H1 (cell line): ENCODE measurements at regions of chr22 and their contacts with region 1.

Region 1: GRCh38 chr22:22241554-22241898 is 3.1 kb upstream of the VPREB1 start:
- DNase-seq: no peak
- H3K4me3 ChIP-seq: no peak overlapping the region
- H3K27ac ChIP-seq: no peak overlapping the region
- H3K4me1 ChIP-seq: no peaks in the 10 kb centered on the region
- H3K27me3 ChIP-seq: peaks cover 84 to 99% (median 97%) of the 10 kb centered on the region in 4 experiments
- CTCF ChIP-seq: no peak
- EP300 ChIP-seq: no peak
- POLR2A ChIP-seq: no peak
- RAD21 ChIP-seq: no peak

Region 2: DNA sequence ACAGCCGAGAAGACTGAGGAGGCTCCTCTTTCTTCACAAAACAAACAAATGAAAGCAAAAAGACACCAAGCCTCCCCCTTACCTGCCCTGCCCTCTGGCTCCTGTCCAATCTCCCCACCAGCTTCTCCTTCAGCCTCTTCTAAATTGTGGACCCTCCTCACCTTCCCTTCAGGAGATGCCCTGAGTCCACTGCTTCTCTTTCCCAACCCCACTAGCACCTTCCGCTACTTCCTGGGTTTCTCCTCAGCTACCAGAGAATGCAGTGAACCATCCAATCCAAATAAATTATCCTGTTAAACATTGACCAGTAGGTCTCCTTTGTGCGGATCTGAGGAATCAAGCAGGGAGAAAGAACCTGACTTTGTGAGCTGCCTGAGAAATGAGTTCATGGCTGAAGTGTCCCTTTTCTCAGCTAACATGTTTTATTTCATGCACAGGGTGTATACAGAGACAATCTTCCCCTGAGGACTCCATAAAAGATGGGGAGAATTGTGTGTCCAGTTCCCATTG is 60.1 kb before region 1 on chr22:
- CTCF ChIA-PET with region 1: no interaction called
- POLR2A ChIA-PET with region 1: no interaction called
- DNase-seq: no peak
- H3K4me3 ChIP-seq: no peak overlapping the region
- H3K27ac ChIP-seq: no peak overlapping the region
- H3K4me1 ChIP-seq: no peaks in the 10 kb centered on the region
- H3K27me3 ChIP-seq: peaks cover 86 to 100% (median 98%) of the 10 kb centered on the region in 4 experiments
- CTCF ChIP-seq: no peak
- EP300 ChIP-seq: no peak
- POLR2A ChIP-seq: no peak
- RAD21 ChIP-seq: no peak

Region 3: GRCh38 chr22:22207845-22208564 is 33.5 kb before region 1 on chr22:
- CTCF ChIA-PET with region 1: interaction called, 29 read pairs
- POLR2A ChIA-PET with region 1: no interaction called
- DNase-seq: peak; percentile 36 to 92
- H3K4me3 ChIP-seq: no peak overlapping the region
- H3K27ac ChIP-seq: no peak overlapping the region
- H3K4me1 ChIP-seq: no peaks in the 10 kb centered on the region
- H3K27me3 ChIP-seq: peaks cover 78 to 99% (median 89%) of the 10 kb centered on the region in 4 experiments
- CTCF ChIP-seq: peak; percentile 74 to 86 (median 81)
- EP300 ChIP-seq: no peak
- POLR2A ChIP-seq: no peak
- RAD21 ChIP-seq: peak; percentile 85 to 86

Region 4: DNA sequence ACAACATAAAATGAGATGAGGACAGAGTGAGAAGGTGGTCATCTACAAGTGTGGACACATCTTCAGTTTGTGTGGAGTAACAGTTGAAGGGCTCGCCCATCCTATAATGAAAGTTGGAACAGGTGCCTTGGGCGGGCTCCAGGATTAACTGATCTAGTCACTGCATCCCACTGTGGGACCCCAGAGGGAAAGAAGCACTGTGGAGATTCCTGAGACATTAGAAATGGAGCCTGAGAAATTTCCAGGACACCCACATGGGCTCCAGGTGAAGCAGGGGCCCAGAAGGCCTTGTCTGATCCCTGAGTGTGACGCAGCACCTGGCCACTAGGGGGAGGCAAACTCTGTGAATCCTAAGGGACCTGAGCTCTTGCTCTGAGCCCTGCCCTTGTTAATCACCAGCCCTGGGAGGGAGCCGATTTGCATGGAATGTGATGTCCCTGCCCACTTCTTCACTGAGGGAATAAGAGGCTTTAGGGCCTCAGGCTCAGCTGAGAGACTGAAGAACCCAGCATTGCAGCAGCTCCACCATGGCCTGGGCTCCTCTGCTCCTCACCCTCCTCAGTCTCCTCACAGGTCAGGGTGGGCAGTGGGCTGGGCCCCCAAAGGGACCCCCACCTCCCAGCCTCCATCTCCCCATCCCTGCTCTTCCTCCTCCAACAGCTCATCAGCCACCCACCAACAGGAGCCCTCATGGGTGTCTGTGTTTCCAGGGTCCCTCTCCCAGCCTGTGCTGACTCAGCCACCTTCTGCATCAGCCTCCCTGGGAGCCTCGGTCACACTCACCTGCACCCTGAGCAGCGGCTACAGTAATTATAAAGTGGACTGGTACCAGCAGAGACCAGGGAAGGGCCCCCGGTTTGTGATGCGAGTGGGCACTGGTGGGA is 101.4 kb after region 1 on chr22:
- CTCF ChIA-PET with region 1: no interaction called
- POLR2A ChIA-PET with region 1: no interaction called
- DNase-seq: peak; percentile 82 to 96
- H3K4me3 ChIP-seq: no peak overlapping the region
- H3K27ac ChIP-seq: no peak overlapping the region
- H3K4me1 ChIP-seq: peaks cover 0 to 4% (median 1%) of the 10 kb centered on the region in 4 experiments; a peak in 2 of 7 replicates
- H3K27me3 ChIP-seq: peaks cover 69 to 98% (median 90%) of the 10 kb centered on the region in 4 experiments
- CTCF ChIP-seq: peak; percentile 85 to 97 (median 88)
- EP300 ChIP-seq: no peak
- POLR2A ChIP-seq: no peak
- RAD21 ChIP-seq: peak; percentile 65 to 70

Region 5: DNA sequence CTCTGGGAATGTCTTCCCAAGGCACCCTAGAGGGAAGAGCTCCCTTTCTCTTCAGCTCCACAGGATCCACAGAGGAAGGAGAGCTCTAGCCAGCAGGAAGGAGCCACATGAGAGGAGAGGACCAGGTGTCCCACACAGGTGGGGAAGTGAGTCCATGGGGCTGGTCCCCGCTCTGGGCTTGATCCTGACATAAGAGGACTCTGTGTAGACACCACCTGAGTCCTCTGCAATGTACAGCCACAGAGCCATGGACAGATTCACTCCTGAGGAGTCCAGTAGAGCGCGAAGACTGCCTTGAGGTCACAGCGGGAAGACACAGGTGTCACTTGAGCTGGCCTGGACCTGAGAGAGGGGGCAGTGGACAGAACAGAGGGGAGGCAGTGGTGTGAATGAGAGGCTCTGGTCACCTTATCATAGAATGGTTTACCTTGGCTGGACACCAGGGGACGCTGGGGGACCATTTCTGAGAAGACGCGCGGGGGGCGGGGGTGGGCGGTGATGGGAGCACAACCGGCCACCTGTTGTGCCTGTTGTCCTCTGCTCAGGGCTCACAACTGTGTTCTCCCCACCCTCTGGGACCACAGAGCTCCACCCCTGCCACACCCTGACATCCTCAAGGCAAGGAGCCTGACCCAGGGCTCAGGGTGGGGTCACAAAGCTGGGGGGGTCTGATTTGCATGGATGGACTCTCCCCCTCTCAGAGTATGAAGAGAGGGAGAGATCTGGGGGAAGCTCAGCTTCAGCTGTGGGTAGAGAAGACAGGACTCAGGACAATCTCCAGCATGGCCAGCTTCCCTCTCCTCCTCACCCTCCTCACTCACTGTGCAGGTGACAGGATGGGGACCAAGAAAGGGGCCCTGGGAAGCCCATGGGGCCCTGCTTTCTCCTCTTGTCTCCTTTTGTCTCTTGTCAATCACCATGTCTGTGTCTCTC is 138.8 kb after region 1 on chr22:
- CTCF ChIA-PET with region 1: no interaction called
- POLR2A ChIA-PET with region 1: no interaction called
- DNase-seq: peak in 1 of 2 experiments; percentile 82
- H3K4me3 ChIP-seq: no peak overlapping the region
- H3K27ac ChIP-seq: no peak overlapping the region
- H3K4me1 ChIP-seq: no peaks in the 10 kb centered on the region
- H3K27me3 ChIP-seq: peaks cover 72 to 98% (median 94%) of the 10 kb centered on the region in 4 experiments
- CTCF ChIP-seq: peak; percentile 40 to 50 (median 47)
- EP300 ChIP-seq: no peak
- POLR2A ChIP-seq: no peak
- RAD21 ChIP-seq: peak; percentile 44 to 45